Left cardiac atrium (tissue), 4 donors: ENCODE measurements at regions of chr3 and their contacts with region 1.

Region 1: GRCh38 chr3:49133226-49133951 is 539 bp upstream of the LAMB2 start:
- DNase-seq: peak; percentile 89
- ATAC-seq: peak; percentile 87 to 89

Region 2: GRCh38 chr3:49093853-49094767 is 39.3 kb before region 1 on chr3 and contains the start of gene QRICH1:
- intact Hi-C with region 1: loop called in 1 of 2 experiments (anchors 1 kb)
- DNase-seq: peak; percentile 97
- ATAC-seq: peak; percentile 92 to 93
- total RNA-seq, gene QRICH1: 50.4 to 59.9 TPM